PC-3 (cell line): ENCODE measurements at regions of chr12 and their contacts with region 1.

Region 1: GRCh38 chr12:96578526-96579125 is 89.2 kb downstream of the CFAP54 start:
- DNase-seq: peak; percentile 80
- ATAC-seq: peak; percentile 79
- H3K4me3 ChIP-seq: no peak overlapping the region
- H3K27ac ChIP-seq: no peak overlapping the region
- H3K4me1 ChIP-seq: no peaks in the 10 kb centered on the region
- H3K27me3 ChIP-seq: no peaks in the 10 kb centered on the region
- CTCF ChIP-seq: peak; percentile 91

Region 2: DNA sequence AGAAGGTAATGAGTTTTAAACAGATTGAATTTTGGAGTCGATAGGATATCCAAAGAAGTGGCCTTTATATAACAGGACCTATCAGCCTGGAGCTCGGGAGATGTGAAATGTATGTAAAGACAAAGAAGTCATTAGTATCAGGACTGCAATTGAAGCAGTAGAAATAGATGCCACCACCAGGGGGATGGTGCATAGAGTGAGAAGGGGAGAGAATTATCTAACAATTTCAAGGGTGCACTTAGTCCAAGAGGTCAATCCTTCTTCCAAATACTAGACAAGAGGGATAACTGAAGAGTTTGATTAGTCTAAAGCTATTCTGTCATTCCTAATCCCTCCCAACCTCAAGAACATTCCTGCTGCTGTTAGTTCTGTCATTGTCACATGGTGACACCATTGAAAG is 38.6 kb after region 1 on chr12:
- CTCF ChIA-PET with region 1: no interaction called
- POLR2A ChIA-PET with region 1: no interaction called
- intact Hi-C with region 1: no loop called
- DNase-seq: peak; percentile 25
- ATAC-seq: no peak
- H3K4me3 ChIP-seq: no peak overlapping the region
- H3K27ac ChIP-seq: no peak overlapping the region
- H3K4me1 ChIP-seq: no peaks in the 10 kb centered on the region
- H3K27me3 ChIP-seq: no peaks in the 10 kb centered on the region
- CTCF ChIP-seq: peak; percentile 47; the same call in 1 of the 2 replicates

Region 3: GRCh38 chr12:96710127-96710745 is 131.6 kb after region 1 on chr12:
- CTCF ChIA-PET with region 1: no interaction called
- POLR2A ChIA-PET with region 1: no interaction called
- intact Hi-C with region 1: loop called (anchors 1 kb)
- DNase-seq: peak; percentile 63
- ATAC-seq: peak; percentile 100
- H3K4me3 ChIP-seq: no peak overlapping the region
- H3K27ac ChIP-seq: no peak overlapping the region
- H3K4me1 ChIP-seq: no peaks in the 10 kb centered on the region
- H3K27me3 ChIP-seq: no peaks in the 10 kb centered on the region
- CTCF ChIP-seq: peak; percentile 54

Region 4: DNA sequence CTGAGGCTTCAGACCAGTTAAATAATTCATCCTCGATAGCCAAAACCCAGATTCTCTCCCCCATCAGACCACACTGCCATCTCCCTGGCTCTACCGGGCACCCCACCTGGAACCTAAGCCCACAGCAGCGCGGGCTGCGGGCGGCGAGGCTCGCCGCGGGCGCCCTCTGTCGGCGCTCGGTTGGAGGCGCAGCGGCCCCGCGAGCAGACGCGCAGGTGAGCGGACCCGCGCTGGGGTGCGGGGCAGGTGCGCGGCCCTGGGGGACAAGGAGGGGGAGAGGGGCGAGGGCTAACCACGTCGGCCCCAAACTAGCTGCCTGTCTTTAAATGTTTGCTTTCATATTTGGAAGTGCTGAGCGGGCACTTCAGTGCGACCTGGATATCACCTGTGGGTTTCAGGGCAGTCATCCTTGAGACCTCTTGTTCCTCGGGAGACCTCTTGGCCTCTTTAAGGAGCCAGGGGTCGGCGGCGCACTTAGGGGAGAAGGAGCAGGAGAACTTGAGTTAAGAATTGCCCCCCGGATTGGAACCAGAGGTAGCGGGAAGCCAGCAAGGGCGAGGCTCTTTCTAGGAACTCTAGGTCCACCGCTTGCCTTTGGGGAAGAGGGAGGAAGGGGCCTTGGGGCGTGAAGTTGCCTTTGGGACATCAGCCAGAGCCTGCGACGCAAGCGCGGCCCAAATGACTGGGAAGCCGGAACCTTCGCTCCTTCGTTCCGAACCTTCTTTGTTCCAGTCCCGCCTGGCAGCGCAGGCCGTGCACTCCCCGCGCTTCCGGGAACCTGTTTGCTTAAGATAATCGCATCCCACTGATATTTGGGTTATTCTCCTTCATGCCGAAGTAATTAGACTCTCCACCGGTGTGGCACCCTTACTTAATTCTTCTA is 407.1 kb after region 1 on chr12:
- CTCF ChIA-PET with region 1: interaction called, 3 read pairs
- POLR2A ChIA-PET with region 1: no interaction called
- intact Hi-C with region 1: loop called (anchors 1 kb)
- DNase-seq: peak; percentile 62
- ATAC-seq: peak; percentile 87
- H3K4me3 ChIP-seq: peak overlapping the region; percentile 68
- H3K27ac ChIP-seq: no peak overlapping the region
- H3K4me1 ChIP-seq: peaks cover 15% of the 10 kb centered on the region
- H3K27me3 ChIP-seq: 0 out of 2 replicates have a peak, but pooled peaks cover 2% of the 10 kb centered on the region
- CTCF ChIP-seq: peak; percentile 95

Region 5: DNA sequence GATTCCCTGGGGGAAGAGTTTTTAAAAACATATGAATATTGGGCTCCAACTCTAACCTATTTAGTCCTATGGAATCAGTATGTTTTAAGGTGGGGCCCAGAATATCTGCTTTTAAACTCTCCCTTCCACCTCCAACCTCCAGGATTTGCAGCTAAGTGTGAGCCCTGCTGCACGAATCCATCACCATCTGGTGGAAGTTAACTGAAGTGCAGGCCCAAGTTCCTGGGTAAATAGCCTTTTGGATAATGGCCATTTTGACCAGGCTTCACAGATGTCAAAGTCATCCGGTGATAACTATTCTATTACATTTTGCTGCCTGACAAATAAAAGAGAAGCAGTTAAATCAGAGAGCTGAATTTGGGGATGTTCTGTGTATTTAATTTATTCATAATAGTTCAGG is 825.9 kb after region 1 on chr12:
- CTCF ChIA-PET with region 1: interaction called, 4 read pairs
- POLR2A ChIA-PET with region 1: no interaction called
- intact Hi-C with region 1: loop called (anchors 5 kb)
- DNase-seq: peak; percentile 64
- ATAC-seq: peak; percentile 42
- H3K4me3 ChIP-seq: no peak overlapping the region
- H3K27ac ChIP-seq: no peak overlapping the region
- H3K4me1 ChIP-seq: no peaks in the 10 kb centered on the region
- H3K27me3 ChIP-seq: peaks cover 12% of the 10 kb centered on the region
- CTCF ChIP-seq: peak; percentile 69

Region 6: GRCh38 chr12:98397316-98398105 is 1818.9 kb after region 1 on chr12:
- CTCF ChIA-PET with region 1: no interaction called
- POLR2A ChIA-PET with region 1: no interaction called
- intact Hi-C with region 1: loop called (anchors 2 kb)
- DNase-seq: peak; percentile 91
- ATAC-seq: peak; percentile 88
- H3K4me3 ChIP-seq: peak overlapping the region; percentile 68
- H3K27ac ChIP-seq: no peak overlapping the region
- H3K4me1 ChIP-seq: peaks cover 21% of the 10 kb centered on the region
- H3K27me3 ChIP-seq: peaks cover 6% of the 10 kb centered on the region
- CTCF ChIP-seq: peak; percentile 88